H1 (cell line): ENCODE measurements at regions of chr1 and their contacts with region 1.

Region 1: GRCh38 chr1:47179017-47179987 is 10.5 kb downstream of the PDZK1IP1 start:
- DNase-seq: peak; percentile 87 to 93
- H3K4me3 ChIP-seq: peak overlapping the region; percentile 26 to 58 (median 48); a peak in 7 of 8 replicates
- H3K27ac ChIP-seq: 0 out of 2 replicates have a peak overlapping the region, but pooled peaks have one; percentile 41
- H3K4me1 ChIP-seq: peaks cover 0 to 10% (median 2%) of the 10 kb centered on the region in 4 experiments; a peak in 4 of 7 replicates
- H3K27me3 ChIP-seq: peaks cover 0 to 13% (median 12%) of the 10 kb centered on the region in 4 experiments; a peak in 5 of 7 replicates
- CTCF ChIP-seq: peak; percentile 84 to 97 (median 93)
- EP300 ChIP-seq: peak in 1 of 2 experiments; percentile 55; a peak in 1 of 3 replicates
- POLR2A ChIP-seq: peak in 1 of 2 experiments; percentile 32; a peak in 1 of 3 replicates
- RAD21 ChIP-seq: peak; percentile 96

Region 2: DNA sequence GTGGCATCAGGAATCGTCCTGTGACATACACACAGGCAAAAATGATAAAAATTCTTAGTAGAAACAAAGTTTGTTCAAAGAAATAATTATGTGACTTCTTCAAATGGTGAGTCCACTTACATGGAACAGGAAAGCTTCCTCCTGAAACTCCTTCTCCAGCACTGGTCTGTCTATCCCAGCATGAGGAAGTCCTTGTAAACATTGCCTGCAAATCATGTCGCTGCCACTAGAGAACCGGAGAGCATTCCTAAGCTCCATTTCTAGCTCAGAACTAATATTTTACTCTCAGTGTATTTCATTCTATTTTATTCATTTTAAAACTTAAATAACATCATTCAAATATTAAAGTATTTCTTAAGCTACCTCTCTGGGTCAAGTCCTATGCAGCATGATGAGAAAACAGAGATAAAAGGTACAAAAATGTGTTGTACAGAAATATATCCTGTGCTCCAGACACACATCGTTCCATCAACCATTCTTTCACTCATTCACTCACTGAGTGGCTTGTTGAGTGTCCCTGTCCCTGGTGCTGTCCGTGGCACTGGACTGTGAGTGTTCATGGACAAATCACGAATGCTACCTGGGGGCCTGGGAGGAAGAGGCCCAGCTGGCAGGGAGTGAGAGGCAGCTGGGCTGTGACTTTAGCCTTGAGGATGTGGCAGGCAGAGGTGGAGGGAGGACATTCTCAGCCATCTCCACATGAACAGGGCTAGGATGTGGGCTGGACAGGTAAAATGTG is 32.1 kb before region 1 on chr1:
- CTCF ChIA-PET with region 1: interaction called, 12 read pairs
- POLR2A ChIA-PET with region 1: no interaction called
- DNase-seq: no peak
- H3K4me3 ChIP-seq: no peak overlapping the region
- H3K27ac ChIP-seq: no peak overlapping the region
- H3K4me1 ChIP-seq: no peaks in the 10 kb centered on the region; a peak in 1 of 7 replicates
- H3K27me3 ChIP-seq: no peaks in the 10 kb centered on the region
- CTCF ChIP-seq: peak in 1 of 3 experiments; percentile 15; a peak in 1 of 4 replicates
- EP300 ChIP-seq: no peak
- POLR2A ChIP-seq: no peak
- RAD21 ChIP-seq: no peak

Region 3: DNA sequence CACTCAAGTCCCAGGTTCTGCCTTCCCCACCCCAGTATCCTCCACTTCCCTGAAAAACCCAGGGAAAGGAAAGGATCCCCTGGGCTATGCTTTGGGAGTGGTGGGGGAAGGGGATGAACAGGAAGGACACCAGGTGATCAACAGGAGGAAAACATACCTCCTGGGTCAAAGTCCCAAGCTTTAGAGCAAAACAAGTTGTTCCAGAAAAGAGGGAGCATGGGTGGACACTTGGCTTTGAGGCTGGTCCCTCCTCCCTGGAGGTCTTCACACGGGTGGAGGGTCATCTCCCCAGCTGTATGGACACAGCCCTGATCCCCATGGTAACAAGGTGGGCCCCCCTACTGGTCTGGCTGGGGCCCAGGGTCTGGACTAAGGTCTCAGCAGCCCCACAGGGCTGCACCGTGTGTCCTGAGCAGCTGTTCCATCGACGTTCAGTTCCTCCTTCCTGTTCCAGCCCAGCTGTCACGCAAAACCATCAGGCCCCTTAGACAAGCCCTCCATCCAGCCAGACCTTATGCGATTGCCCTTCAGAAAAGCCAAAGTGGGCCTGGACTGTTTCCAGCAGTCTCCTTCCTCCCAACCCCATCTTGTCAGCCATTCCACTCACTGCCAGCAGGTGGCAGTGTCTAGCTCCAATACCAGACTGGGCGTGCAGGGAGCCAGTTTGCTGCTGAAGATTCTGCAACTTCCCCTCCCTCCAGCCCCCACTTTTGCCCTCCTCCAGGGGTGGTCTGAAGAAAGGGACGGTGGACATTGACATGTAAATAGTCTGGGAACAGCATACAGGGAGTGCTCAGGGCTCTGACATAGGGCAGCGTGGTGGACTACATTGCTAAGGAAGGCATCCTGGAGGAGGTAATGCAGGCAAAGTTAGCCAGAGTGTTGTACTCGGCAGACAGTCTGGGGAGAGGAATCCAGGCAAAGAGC is 13.4 kb after region 1 on chr1:
- CTCF ChIA-PET with region 1: interaction called, 207 read pairs
- POLR2A ChIA-PET with region 1: interaction called, 10 read pairs
- DNase-seq: peak; percentile 90 to 91
- H3K4me3 ChIP-seq: no peak overlapping the region
- H3K27ac ChIP-seq: no peak overlapping the region
- H3K4me1 ChIP-seq: peaks cover 5 to 22% (median 12%) of the 10 kb centered on the region in 4 experiments
- H3K27me3 ChIP-seq: peaks cover 0 to 17% (median 11%) of the 10 kb centered on the region in 4 experiments; a peak in 3 of 7 replicates
- CTCF ChIP-seq: peak; percentile 89 to 99 (median 95)
- EP300 ChIP-seq: peak in 1 of 2 experiments; percentile 69; a peak in 1 of 3 replicates
- POLR2A ChIP-seq: no peak
- RAD21 ChIP-seq: peak; percentile 90 to 92

Region 4: GRCh38 chr1:47211796-47212269 is 32.5 kb after region 1 on chr1:
- CTCF ChIA-PET with region 1: interaction called, 13 read pairs
- POLR2A ChIA-PET with region 1: no interaction called
- DNase-seq: no peak
- H3K4me3 ChIP-seq: no peak overlapping the region
- H3K27ac ChIP-seq: no peak overlapping the region
- H3K4me1 ChIP-seq: peaks cover 5 to 25% (median 16%) of the 10 kb centered on the region in 4 experiments
- H3K27me3 ChIP-seq: peaks cover 2 to 35% (median 27%) of the 10 kb centered on the region in 4 experiments
- CTCF ChIP-seq: no peak
- EP300 ChIP-seq: no peak
- POLR2A ChIP-seq: no peak
- RAD21 ChIP-seq: no peak

Region 5: GRCh38 chr1:47252369-47252768 is 73.1 kb after region 1 on chr1:
- CTCF ChIA-PET with region 1: interaction called, 11 read pairs
- POLR2A ChIA-PET with region 1: interaction called, 5 read pairs
- DNase-seq: no peak
- H3K4me3 ChIP-seq: no peak overlapping the region
- H3K27ac ChIP-seq: no peak overlapping the region
- H3K4me1 ChIP-seq: no peaks in the 10 kb centered on the region
- H3K27me3 ChIP-seq: no peaks in the 10 kb centered on the region
- CTCF ChIP-seq: no peak
- EP300 ChIP-seq: no peak
- POLR2A ChIP-seq: no peak
- RAD21 ChIP-seq: no peak

Region 6: DNA sequence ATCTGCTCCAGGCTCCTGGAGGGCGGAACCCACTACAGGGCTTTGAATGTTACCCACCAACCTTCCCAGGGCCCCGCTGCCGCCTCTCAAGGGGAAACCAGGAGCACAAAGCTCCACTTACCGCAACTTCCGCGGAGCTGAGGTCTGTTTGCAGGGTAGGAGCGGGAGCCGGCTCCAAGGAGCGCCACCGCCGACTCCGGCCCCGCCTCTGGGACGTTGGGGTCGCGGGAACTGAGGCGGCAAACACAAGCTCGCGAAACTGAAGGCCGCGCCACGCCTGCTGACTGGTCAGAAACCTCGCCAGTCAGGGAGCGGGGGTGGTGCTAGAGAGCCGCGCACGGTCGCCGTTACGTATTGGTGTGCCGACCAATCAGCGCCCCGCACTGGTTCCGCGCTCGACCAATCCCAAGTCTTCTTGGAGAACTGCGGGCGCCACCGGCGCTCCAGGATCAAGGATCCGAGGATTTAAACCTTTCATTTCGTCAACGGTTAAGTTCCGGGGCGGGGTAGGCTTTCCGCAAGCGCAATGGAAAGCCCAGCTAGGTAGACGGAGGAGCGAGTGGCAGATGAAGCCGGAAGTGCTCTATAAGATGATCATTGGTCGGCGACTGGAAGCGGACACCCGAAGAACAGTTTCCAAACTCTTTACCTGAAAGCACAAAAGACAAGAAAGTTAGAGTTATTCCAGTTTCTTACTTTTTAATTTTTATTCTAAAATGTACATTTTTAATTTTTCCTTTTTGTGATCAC is 134.8 kb after region 1 on chr1 and contains the start of gene STIL:
- CTCF ChIA-PET with region 1: interaction called, 10 read pairs
- POLR2A ChIA-PET with region 1: interaction called, 3 read pairs
- DNase-seq: peak; percentile 97 to 99
- H3K4me3 ChIP-seq: peak within 1 kb of the TSS; percentile 83 to 99 (median 93)
- H3K27ac ChIP-seq: peak within 1 kb of the TSS; percentile 67
- H3K4me1 ChIP-seq: no peaks in the 10 kb centered on the region; a peak in 1 of 7 replicates
- H3K27me3 ChIP-seq: no peaks in the 10 kb centered on the region
- CTCF ChIP-seq: no peak
- EP300 ChIP-seq: no peak
- POLR2A ChIP-seq: peak; percentile 52 to 93
- RAD21 ChIP-seq: no peak
- total RNA-seq, gene STIL: 25.1 and 26.5 TPM in 2 replicates

Region 7: DNA sequence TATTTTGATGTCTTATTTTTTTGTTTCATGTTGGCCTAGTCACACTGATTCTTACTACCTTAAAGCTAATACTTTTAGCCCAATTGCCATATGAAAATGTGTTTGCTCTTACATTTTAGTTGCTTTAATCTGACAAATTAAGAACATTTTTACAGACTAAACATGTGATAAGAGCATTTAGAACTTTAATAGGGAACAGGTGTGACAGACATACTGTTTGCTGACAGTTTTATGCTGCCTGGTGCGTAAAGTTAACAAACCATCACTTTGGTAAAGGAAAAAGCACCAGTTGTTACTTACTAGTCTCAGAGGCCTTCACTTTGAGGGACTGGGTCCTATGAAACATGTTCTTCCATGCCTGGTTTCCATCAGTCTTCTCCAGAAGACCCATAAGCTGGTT is 168.9 kb after region 1 on chr1:
- CTCF ChIA-PET with region 1: no interaction called
- POLR2A ChIA-PET with region 1: no interaction called
- DNase-seq: no peak
- H3K4me3 ChIP-seq: no peak overlapping the region
- H3K27ac ChIP-seq: no peak overlapping the region
- H3K4me1 ChIP-seq: no peaks in the 10 kb centered on the region
- H3K27me3 ChIP-seq: no peaks in the 10 kb centered on the region
- CTCF ChIP-seq: no peak
- EP300 ChIP-seq: no peak
- POLR2A ChIP-seq: no peak
- RAD21 ChIP-seq: no peak